Activated CD4-positive, alpha-beta memory T cell treated with anti-CD3 and anti-CD28 coated beads, Interleukin-2, amount 10 ng/mL, durations not matched to agents 7 days and 5 days (primary cell): ENCODE measurements at regions of chr15 and their contacts with region 1.

Region 1: GRCh38 chr15:64825431-64826294 is at the start of gene PIF1:
- DNase-seq: peak; percentile 94
- H3K4me3 Mint-ChIP-seq: peak within 1 kb of the TSS; percentile 93
- H3K27ac Mint-ChIP-seq: peak within 1 kb of the TSS; percentile 89
- H3K4me1 Mint-ChIP-seq: peaks cover 41% of the 10 kb centered on the region
- H3K27me3 Mint-ChIP-seq: no peaks in the 10 kb centered on the region
- total RNA-seq, gene PIF1: 46.1 to 49.1 TPM

Region 2: GRCh38 chr15:64809649-64810496 is 15.8 kb before region 1 on chr15:
- CTCF ChIA-PET with region 1: interaction called, 12 read pairs
- POLR2A ChIA-PET with region 1: interaction called, 6 read pairs
- DNase-seq: peak; percentile 76
- H3K4me3 Mint-ChIP-seq: no peak overlapping the region
- H3K27ac Mint-ChIP-seq: no peak overlapping the region
- H3K4me1 Mint-ChIP-seq: peaks cover 2% of the 10 kb centered on the region
- H3K27me3 Mint-ChIP-seq: peaks cover 8% of the 10 kb centered on the region

Region 3: GRCh38 chr15:64836023-64836536 is 10.4 kb after region 1 on chr15:
- CTCF ChIA-PET with region 1: interaction called, 34 read pairs
- POLR2A ChIA-PET with region 1: interaction called, 16 read pairs
- DNase-seq: no peak
- H3K4me3 Mint-ChIP-seq: peak overlapping the region; percentile 35
- H3K27ac Mint-ChIP-seq: peak overlapping the region; percentile 55
- H3K4me1 Mint-ChIP-seq: peaks cover 47% of the 10 kb centered on the region
- H3K27me3 Mint-ChIP-seq: no peaks in the 10 kb centered on the region

Region 4: DNA sequence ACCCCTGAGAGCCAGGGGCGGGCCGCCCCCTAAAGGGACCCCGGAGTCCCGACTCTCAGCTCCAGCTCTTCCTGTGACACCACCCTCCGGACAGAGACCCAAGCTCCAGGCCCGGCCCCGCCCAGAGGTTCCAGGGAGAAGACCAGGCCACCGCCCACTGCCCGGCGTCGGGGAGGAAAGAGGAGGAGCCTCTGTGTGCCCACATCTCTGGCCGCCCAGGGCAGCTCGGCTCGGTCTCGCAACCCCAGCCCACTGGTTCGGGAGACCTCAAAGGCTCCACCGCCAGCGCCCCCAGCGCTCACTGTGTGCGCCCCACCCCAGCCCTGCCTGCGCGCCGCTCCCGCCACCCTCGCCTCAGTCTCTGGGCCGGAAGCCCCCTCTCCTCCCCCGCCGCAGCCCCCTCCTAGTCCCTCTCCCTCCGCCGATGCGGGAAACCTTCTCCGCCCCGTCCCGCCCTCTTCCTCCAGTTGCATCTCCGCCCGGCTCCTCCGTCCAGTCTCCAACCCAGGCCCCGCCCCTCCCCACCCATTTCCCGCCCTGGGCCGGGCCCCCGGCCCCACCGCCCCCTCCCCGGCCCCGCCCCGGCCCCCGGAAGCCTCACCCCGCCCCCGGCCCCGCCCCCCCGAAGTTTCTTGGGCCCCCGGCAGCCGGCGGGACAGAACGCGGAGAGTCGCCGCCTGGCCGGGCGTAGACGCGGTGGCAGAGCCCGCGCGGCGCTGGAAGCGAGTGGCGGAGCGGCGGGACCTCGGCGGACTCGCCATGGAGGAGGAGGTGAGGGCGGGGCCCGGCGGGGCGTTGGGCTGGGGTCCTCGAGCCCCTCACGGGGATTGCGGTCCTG is 15.8 kb after region 1 on chr15 and contains the start of gene PLEKHO2:
- CTCF ChIA-PET with region 1: interaction called, 34 read pairs
- POLR2A ChIA-PET with region 1: interaction called, 16 read pairs
- DNase-seq: peak; percentile 95
- H3K4me3 Mint-ChIP-seq: peak within 1 kb of the TSS; percentile 98
- H3K27ac Mint-ChIP-seq: peak within 1 kb of the TSS; percentile 84
- H3K4me1 Mint-ChIP-seq: peaks cover 71% of the 10 kb centered on the region
- H3K27me3 Mint-ChIP-seq: no peaks in the 10 kb centered on the region
- total RNA-seq, gene PLEKHO2: 32.9 to 33.1 TPM